IMR-90 (cell line): ENCODE measurements at regions of chr15 and their contacts with region 1.

Region 1: DNA sequence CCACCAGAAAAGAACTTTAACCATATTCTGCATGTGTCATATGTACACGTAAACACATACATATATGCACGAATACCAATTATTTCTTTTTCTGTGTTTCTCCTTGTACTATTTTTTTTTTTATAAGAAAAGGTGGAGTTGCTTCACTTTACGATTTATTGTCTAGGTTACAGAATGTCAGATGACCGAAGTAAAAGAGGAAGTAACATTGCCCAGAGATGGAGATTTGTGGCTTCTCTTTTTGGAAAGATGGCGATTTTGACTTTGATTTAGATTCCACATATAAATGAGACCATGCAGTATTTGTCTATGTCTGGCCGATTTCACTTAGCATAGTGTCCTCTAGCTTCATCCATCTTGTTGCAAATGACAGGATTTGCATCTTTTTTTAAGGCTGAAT is 293.1 kb downstream of the SV2B start:
- DNase-seq: no peak
- ATAC-seq: no peak
- H3K4me3 ChIP-seq: no peak overlapping the region
- H3K27ac ChIP-seq: no peak overlapping the region
- H3K4me1 ChIP-seq: no peaks in the 10 kb centered on the region
- H3K27me3 ChIP-seq: no peaks in the 10 kb centered on the region
- CTCF ChIP-seq: no peak
- POLR2A ChIP-seq: no peak
- RAD21 ChIP-seq: no peak

Region 2: DNA sequence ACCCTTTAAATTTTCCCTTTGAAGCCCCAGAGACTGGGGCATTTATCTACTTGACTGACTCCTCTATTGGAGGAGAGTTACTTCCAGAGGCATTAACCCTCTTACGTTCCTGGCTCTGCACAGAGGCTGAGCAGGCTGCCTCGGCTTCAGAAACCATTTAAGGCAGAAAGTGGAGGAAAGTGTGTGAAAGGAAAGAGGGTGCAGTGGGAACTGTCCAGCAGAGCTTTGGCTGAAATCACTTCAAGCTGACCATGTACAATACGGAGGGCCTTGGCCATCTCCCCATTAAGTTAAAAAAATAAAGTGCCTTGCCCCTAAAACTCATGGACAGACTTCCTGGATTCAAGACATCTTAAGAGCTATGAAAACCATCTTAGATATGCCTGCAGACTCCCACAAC is 54.4 kb before region 1 on chr15:
- CTCF ChIA-PET with region 1: no interaction called
- POLR2A ChIA-PET with region 1: no interaction called
- dilution Hi-C with region 1: no loop called
- in situ Hi-C with region 1: loop called (anchors 10 kb)
- intact Hi-C with region 1: no loop called
- DNase-seq: peak; percentile 40
- ATAC-seq: peak; percentile 72
- H3K4me3 ChIP-seq: no peak overlapping the region
- H3K27ac ChIP-seq: no peak overlapping the region
- H3K4me1 ChIP-seq: no peaks in the 10 kb centered on the region
- H3K27me3 ChIP-seq: no peaks in the 10 kb centered on the region
- CTCF ChIP-seq: no peak
- POLR2A ChIP-seq: no peak
- RAD21 ChIP-seq: no peak

Region 3: GRCh38 chr15:91813924-91814323 is 420.7 kb after region 1 on chr15:
- CTCF ChIA-PET with region 1: no interaction called
- POLR2A ChIA-PET with region 1: no interaction called
- dilution Hi-C with region 1: no loop called
- in situ Hi-C with region 1: no loop called
- intact Hi-C with region 1: no loop called
- DNase-seq: no peak
- ATAC-seq: no peak
- H3K4me3 ChIP-seq: no peak overlapping the region
- H3K27ac ChIP-seq: no peak overlapping the region
- H3K4me1 ChIP-seq: no peaks in the 10 kb centered on the region
- H3K27me3 ChIP-seq: no peaks in the 10 kb centered on the region
- CTCF ChIP-seq: no peak
- POLR2A ChIP-seq: no peak
- RAD21 ChIP-seq: no peak

Region 4: GRCh38 chr15:92780843-92781242 is 1387.7 kb after region 1 on chr15:
- CTCF ChIA-PET with region 1: no interaction called
- POLR2A ChIA-PET with region 1: no interaction called
- dilution Hi-C with region 1: no loop called
- in situ Hi-C with region 1: no loop called
- intact Hi-C with region 1: no loop called
- DNase-seq: no peak
- ATAC-seq: no peak
- H3K4me3 ChIP-seq: no peak overlapping the region
- H3K27ac ChIP-seq: no peak overlapping the region
- H3K4me1 ChIP-seq: no peaks in the 10 kb centered on the region
- H3K27me3 ChIP-seq: no peaks in the 10 kb centered on the region
- CTCF ChIP-seq: no peak
- POLR2A ChIP-seq: no peak
- RAD21 ChIP-seq: no peak